Activated T-helper 1 cell treated with anti-CD3 and anti-CD28 coated beads, Interleukin-12 subunit alpha, Interleukin-12 subunit beta, Interleukin-2, Interleukin-4 antibody, amounts not matched to agents 30 ng/mL and 10 ng/mL and 1 ng/mL, durations not matched to agents 14 hours and 24 hours and 36 hours (primary cell): ENCODE measurements at regions of chr1 and their contacts with region 1.

Region 1: GRCh38 chr1:247857069-247857984 is at the start of gene TRIM58:
- DNase-seq: peak; percentile 3
- H3K4me3 Mint-ChIP-seq: peak within 1 kb of the TSS; percentile 78
- H3K27ac Mint-ChIP-seq: peak within 1 kb of the TSS; percentile 55
- H3K4me1 Mint-ChIP-seq: peaks cover 7% of the 10 kb centered on the region
- H3K27me3 Mint-ChIP-seq: peaks cover 22% of the 10 kb centered on the region
- total RNA-seq, gene TRIM58: 0.32 and 0.36 TPM in 2 replicates

Region 2: DNA sequence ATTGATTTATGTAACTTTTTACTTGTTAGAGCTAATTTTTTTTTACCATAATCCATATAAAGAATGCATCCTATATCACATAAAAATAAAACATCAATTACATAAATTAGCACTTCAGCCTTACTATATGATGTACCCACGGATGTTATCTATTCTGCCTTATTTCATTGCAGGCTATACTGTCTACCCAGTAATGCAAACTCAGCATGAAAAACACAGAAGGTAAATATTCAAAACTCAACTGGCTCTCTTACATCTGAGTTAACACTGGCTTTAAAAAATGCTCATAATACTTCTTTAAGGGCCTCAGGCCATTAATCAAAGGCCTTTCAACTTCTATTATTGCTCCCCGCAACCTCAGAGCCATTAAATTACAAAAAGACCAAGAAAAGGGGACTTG is 991.4 kb before region 1 on chr1:
- intact Hi-C with region 1: no loop called
- DNase-seq: no peak
- H3K4me3 Mint-ChIP-seq: no peak overlapping the region
- H3K27ac Mint-ChIP-seq: no peak overlapping the region
- H3K4me1 Mint-ChIP-seq: no peaks in the 10 kb centered on the region
- H3K27me3 Mint-ChIP-seq: no peaks in the 10 kb centered on the region

Region 3: DNA sequence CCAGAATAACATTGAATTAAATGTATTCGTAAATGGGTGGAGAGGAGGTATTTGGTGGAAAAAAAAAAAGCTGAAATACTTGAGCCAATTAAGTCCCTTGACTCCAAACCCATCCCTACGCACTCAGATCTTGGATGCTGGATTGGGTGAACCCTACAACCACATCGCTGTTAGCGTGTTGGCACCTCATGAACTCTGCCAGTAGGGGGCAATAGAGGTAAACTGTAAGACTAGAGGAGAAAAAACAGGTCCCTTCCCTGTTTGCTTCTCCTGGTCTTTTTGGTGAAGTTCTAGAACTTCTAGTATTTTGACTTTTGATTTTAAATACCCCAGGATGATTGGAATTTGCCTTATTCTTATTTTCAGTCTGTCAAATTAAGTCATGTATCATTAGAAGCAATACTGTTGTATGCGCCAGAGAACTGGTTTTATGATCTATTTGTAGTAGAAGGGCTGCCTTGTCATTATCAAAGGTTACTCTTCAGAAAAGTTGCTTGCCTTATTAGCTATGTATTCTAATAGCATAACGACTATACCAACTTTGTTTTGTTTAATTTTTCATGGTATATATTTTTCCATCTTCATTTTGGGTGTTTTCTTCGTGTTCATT is 175.9 kb before region 1 on chr1:
- intact Hi-C with region 1: loop called (anchors 5 kb)
- DNase-seq: no peak
- H3K4me3 Mint-ChIP-seq: no peak overlapping the region
- H3K27ac Mint-ChIP-seq: no peak overlapping the region
- H3K4me1 Mint-ChIP-seq: no peaks in the 10 kb centered on the region
- H3K27me3 Mint-ChIP-seq: peaks cover 3% of the 10 kb centered on the region

Region 4: DNA sequence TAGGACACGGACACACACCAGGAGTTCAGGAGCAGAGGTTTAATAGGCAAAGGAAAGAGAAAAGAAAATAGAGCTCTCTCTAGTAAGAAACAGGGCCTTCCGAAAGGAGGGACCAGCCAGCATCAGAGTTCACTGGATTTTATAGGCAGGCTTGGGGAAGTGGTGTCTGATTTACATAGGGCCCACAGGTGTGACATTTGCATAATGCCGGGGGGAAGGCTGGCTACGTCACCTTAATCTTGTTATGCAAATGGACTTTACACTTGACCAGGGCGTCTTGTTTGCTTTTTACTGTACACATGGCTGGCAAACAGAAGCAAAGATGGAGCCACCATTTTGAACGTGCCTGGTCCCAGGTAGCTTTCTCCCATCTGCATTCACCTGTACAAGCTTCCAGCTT is 33.3 kb before region 1 on chr1 and contains the start of gene OR14A16:
- intact Hi-C with region 1: no loop called
- DNase-seq: no peak
- H3K4me3 Mint-ChIP-seq: no peak within 1 kb of the TSS
- H3K27ac Mint-ChIP-seq: no peak within 1 kb of the TSS
- H3K4me1 Mint-ChIP-seq: no peaks in the 10 kb centered on the region
- H3K27me3 Mint-ChIP-seq: peaks cover 3% of the 10 kb centered on the region
- total RNA-seq, gene OR14A16: not detected in 2 replicates